CD4-positive, alpha-beta T cell (primary cell): ENCODE measurements at regions of chr16 and their contacts with region 1.

Region 1: GRCh38 chr16:50160495-50161164 is 7.5 kb downstream of the TENT4B start:
- DNase-seq: peak in 3 of 14 experiments; percentile 42 to 65 (median 47)
- ATAC-seq: peak; percentile 82
- H3K4me3 ChIP-seq: no peak overlapping the region
- H3K4me3 Mint-ChIP-seq: peak overlapping the region; percentile 58
- H3K27ac ChIP-seq: no peak overlapping the region
- H3K27ac Mint-ChIP-seq: peak overlapping the region; percentile 86
- H3K4me1 ChIP-seq: peaks cover 39% of the 10 kb centered on the region
- H3K4me1 Mint-ChIP-seq: peaks cover 68% of the 10 kb centered on the region
- H3K27me3 ChIP-seq: no peaks in the 10 kb centered on the region
- H3K27me3 Mint-ChIP-seq: no peaks in the 10 kb centered on the region
- CTCF ChIP-seq: no peak

Region 2: GRCh38 chr16:50121721-50122445 is 38.7 kb before region 1 on chr16:
- CTCF ChIA-PET with region 1: no interaction called
- POLR2A ChIA-PET with region 1: interaction called, 3 read pairs
- intact Hi-C with region 1: loop called in 1 of 2 experiments (anchors 5 kb)
- DNase-seq: peak in 10 of 14 experiments; percentile 2 to 69 (median 42)
- ATAC-seq: peak; percentile 94
- H3K4me3 ChIP-seq: no peak overlapping the region
- H3K4me3 Mint-ChIP-seq: no peak overlapping the region
- H3K27ac ChIP-seq: no peak overlapping the region
- H3K27ac Mint-ChIP-seq: peak overlapping the region; percentile 22
- H3K4me1 ChIP-seq: peaks cover 12% of the 10 kb centered on the region
- H3K4me1 Mint-ChIP-seq: peaks cover 17% of the 10 kb centered on the region
- H3K27me3 ChIP-seq: no peaks in the 10 kb centered on the region
- H3K27me3 Mint-ChIP-seq: no peaks in the 10 kb centered on the region
- CTCF ChIP-seq: no peak

Region 3: GRCh38 chr16:50195276-50195675 is 34.6 kb after region 1 on chr16:
- CTCF ChIA-PET with region 1: no interaction called
- POLR2A ChIA-PET with region 1: interaction called, 3 read pairs
- intact Hi-C with region 1: loop called (anchors 5 kb)
- DNase-seq: peak in 1 of 14 experiments; percentile 27
- ATAC-seq: no peak
- H3K4me3 ChIP-seq: no peak overlapping the region
- H3K4me3 Mint-ChIP-seq: no peak overlapping the region
- H3K27ac ChIP-seq: no peak overlapping the region
- H3K27ac Mint-ChIP-seq: peak overlapping the region; percentile 63
- H3K4me1 ChIP-seq: peaks cover 18% of the 10 kb centered on the region
- H3K4me1 Mint-ChIP-seq: peaks cover 66% of the 10 kb centered on the region
- H3K27me3 ChIP-seq: no peaks in the 10 kb centered on the region
- H3K27me3 Mint-ChIP-seq: no peaks in the 10 kb centered on the region
- CTCF ChIP-seq: no peak